ENCODE measurements at regions of chr2 and their contacts with region 1.

Region 1: DNA sequence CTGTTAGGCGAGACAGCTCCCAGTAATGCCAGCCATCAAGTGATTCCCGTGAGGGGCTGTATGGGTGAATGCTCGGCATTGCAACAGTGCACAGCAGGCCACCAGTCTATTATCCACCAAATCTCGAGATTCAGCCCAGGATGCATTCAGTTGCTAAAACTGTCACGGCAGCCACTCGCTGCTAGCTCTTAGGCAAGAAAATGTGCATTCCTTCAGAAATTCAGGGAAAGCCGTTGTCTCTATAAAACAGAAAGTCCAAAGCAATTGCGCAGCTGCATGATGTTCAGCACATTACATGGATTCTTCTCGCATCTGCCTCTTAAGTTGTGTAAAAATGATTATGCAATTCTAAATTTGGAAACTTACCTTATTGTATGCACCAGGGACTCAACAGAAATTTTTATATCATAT is 211.3 kb upstream of the ARL4C start:
- DNase-seq: no peak
- ATAC-seq: no peak
- H3K4me3 ChIP-seq: no peak overlapping the region
- H3K27ac ChIP-seq: no peak overlapping the region
- H3K4me1 ChIP-seq: no peaks in the 10 kb centered on the region
- H3K27me3 ChIP-seq: no peaks in the 10 kb centered on the region
- CTCF ChIP-seq: no peak

Region 2: GRCh38 chr2:234873103-234873827 is 165.1 kb after region 1 on chr2:
- CTCF ChIA-PET with region 1: no interaction called
- POLR2A ChIA-PET with region 1: interaction called, 11 read pairs
- in situ Hi-C with region 1: no loop called
- intact Hi-C with region 1: no loop called
- DNase-seq: no peak
- ATAC-seq: no peak
- H3K4me3 ChIP-seq: no peak overlapping the region
- H3K27ac ChIP-seq: no peak overlapping the region
- H3K4me1 ChIP-seq: 0 out of 2 replicates have a peak, but pooled peaks cover 3% of the 10 kb centered on the region
- H3K27me3 ChIP-seq: no peaks in the 10 kb centered on the region
- CTCF ChIP-seq: no peak

Region 3: DNA sequence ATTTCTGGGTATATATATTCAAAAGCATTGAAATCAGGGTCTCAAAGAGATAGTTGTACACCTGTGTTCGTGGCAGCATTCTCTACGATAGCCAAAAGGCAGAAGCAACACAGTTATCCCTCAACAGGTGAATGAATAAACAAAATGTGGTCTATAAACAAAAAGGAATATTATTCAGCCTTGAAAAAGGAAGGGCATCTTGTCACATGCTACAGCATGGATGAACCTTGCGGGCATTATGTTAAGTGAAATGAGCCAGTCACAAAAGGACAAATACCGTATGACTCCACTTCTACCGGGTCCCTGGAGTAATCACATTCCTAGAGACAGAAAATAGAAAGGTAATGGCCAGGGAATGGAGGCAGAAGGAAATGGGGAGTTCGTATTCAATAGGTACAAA is 472.4 kb after region 1 on chr2:
- CTCF ChIA-PET with region 1: no interaction called
- POLR2A ChIA-PET with region 1: interaction called, 13 read pairs
- in situ Hi-C with region 1: no loop called
- intact Hi-C with region 1: no loop called
- DNase-seq: no peak
- ATAC-seq: no peak
- H3K4me3 ChIP-seq: no peak overlapping the region
- H3K27ac ChIP-seq: no peak overlapping the region
- H3K4me1 ChIP-seq: no peaks in the 10 kb centered on the region
- H3K27me3 ChIP-seq: peaks cover 17% of the 10 kb centered on the region; the same call in 1 of the 2 replicates
- CTCF ChIP-seq: no peak